GM12878 (cell line): ENCODE measurements at regions of chr4 and their contacts with region 1.

Region 1: DNA sequence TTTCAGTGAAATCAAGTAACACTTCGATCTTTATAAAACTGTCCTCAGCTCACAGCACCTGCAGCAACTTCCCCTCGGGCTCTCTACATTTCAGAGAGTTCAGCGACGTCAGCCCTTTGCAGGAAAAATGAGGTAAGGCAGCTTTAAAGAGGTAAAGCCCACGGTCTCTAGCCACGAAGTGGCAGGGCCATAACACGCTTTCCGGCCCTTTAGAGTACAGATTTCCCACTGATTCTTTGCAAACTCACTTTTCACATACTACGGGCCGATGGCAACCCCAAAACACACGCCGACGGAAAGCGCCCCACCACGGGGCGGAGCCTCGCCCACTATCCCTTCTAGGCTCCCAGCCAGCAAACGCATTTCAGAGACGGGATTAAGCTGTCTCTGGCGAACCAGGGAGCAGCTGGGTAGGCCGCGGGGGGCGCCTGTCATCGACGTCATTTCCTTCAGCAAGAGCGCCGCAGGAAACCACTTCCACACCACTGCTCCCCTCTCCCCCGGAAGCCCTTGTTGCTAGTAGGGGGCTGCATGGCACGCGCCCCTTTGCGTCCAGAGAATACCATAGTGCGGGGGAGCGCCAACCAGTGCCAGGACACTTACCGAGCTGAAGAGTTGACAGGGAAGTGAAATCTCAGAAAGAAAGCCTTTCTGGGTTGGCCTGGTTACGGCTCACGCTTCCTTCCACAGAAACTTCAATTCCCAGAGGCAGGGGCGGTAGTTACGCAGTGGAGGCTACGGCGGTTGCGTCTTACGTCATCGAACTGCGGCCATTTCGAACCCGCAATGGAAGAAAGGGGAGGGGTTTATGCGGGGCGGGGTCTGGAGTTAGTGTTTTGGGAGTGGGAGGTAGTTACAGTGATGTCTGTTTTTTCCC is at the start of gene TRMT10A:
- DNase-seq: peak; percentile 85
- ATAC-seq: peak; percentile 95
- H3K4me3 ChIP-seq: peak within 1 kb of the TSS; percentile 93
- H3K27ac ChIP-seq: peak within 1 kb of the TSS; percentile 97
- H3K4me1 ChIP-seq: no peaks in the 10 kb centered on the region
- H3K27me3 ChIP-seq: no peaks in the 10 kb centered on the region
- CTCF ChIP-seq: no peak
- EP300 ChIP-seq: no peak
- POLR2A ChIP-seq: peak; percentile 81
- RAD21 ChIP-seq: no peak
- polyA plus RNA-seq, gene TRMT10A: 8.8 to 9.6 TPM

Region 2: GRCh38 chr4:99366491-99366890 is 197.1 kb before region 1 on chr4:
- CTCF ChIA-PET with region 1: no interaction called
- POLR2A ChIA-PET with region 1: no interaction called
- RAD21 ChIA-PET with region 1: no interaction called
- SMC1A ChIA-PET with region 1: no interaction called
- in situ Hi-C with region 1: no loop called
- intact Hi-C with region 1: no loop called
- DNase-seq: no peak
- ATAC-seq: no peak
- H3K4me3 ChIP-seq: no peak overlapping the region
- H3K27ac ChIP-seq: no peak overlapping the region
- H3K4me1 ChIP-seq: no peaks in the 10 kb centered on the region
- H3K27me3 ChIP-seq: no peaks in the 10 kb centered on the region
- CTCF ChIP-seq: no peak
- EP300 ChIP-seq: no peak
- POLR2A ChIP-seq: no peak
- RAD21 ChIP-seq: no peak

Region 3: DNA sequence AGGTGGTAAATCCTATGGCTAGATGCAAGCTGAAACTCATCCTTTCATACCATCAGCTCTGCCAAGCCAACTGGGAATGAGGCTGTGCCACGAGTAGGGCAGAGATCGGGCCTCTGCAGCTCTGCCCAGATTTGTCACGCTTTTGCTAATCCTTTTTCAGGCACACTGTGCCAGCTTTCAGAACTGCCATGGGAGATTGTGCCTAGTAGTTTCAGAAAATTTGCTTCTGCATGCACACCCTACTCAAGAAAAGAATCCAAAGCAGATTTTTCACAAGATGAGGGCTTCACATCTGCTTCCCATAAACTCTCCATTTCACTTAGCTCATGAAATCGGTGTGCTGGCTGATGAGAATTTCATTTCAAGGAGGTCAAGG is 125.2 kb before region 1 on chr4:
- CTCF ChIA-PET with region 1: no interaction called
- POLR2A ChIA-PET with region 1: no interaction called
- RAD21 ChIA-PET with region 1: no interaction called
- SMC1A ChIA-PET with region 1: no interaction called
- in situ Hi-C with region 1: no loop called
- intact Hi-C with region 1: no loop called
- DNase-seq: no peak
- ATAC-seq: no peak
- H3K4me3 ChIP-seq: no peak overlapping the region
- H3K27ac ChIP-seq: no peak overlapping the region
- H3K4me1 ChIP-seq: no peaks in the 10 kb centered on the region
- H3K27me3 ChIP-seq: no peaks in the 10 kb centered on the region
- CTCF ChIP-seq: no peak
- EP300 ChIP-seq: no peak
- POLR2A ChIP-seq: no peak
- RAD21 ChIP-seq: no peak

Region 4: DNA sequence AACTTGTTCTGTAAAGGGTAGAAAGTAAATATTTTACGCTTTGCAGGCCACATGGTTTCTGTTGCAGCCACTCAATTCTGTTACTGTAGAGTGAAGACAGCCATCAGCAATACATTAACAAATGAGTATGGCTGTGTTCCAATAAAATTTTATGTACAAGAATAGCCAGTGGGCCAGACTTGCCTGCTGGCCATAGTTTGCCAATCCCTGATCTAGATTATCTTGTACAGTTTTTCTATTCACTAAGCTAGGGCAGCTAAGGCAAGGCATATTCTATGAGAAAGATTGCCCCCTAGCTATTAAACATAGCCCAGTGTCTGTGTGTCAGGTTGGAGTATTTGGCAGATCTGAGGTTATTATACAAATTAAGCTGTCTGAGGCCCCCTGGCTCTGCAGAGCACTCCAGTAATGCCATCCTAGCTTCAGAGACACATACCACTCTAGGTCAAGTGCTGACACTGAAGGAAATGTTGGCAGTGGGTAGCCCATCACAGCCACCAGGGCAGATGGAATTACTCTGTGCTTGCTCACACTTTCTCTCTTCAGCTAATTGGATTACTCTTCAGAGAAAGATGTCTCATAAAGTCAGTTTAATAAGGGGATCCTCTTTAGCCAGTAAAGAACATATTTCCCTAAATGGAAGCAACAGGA is 51.7 kb after region 1 on chr4:
- CTCF ChIA-PET with region 1: interaction called, 19 read pairs
- POLR2A ChIA-PET with region 1: no interaction called
- RAD21 ChIA-PET with region 1: interaction called, 13 read pairs
- SMC1A ChIA-PET with region 1: interaction called, 11 read pairs
- in situ Hi-C with region 1: no loop called
- intact Hi-C with region 1: no loop called
- DNase-seq: no peak
- ATAC-seq: peak; percentile 57
- H3K4me3 ChIP-seq: no peak overlapping the region
- H3K27ac ChIP-seq: no peak overlapping the region
- H3K4me1 ChIP-seq: no peaks in the 10 kb centered on the region
- H3K27me3 ChIP-seq: no peaks in the 10 kb centered on the region
- CTCF ChIP-seq: peak in 2 of 3 experiments; percentile 4 to 26; a peak in 1 of 6 replicates
- EP300 ChIP-seq: no peak
- POLR2A ChIP-seq: no peak
- RAD21 ChIP-seq: no peak

Region 5: DNA sequence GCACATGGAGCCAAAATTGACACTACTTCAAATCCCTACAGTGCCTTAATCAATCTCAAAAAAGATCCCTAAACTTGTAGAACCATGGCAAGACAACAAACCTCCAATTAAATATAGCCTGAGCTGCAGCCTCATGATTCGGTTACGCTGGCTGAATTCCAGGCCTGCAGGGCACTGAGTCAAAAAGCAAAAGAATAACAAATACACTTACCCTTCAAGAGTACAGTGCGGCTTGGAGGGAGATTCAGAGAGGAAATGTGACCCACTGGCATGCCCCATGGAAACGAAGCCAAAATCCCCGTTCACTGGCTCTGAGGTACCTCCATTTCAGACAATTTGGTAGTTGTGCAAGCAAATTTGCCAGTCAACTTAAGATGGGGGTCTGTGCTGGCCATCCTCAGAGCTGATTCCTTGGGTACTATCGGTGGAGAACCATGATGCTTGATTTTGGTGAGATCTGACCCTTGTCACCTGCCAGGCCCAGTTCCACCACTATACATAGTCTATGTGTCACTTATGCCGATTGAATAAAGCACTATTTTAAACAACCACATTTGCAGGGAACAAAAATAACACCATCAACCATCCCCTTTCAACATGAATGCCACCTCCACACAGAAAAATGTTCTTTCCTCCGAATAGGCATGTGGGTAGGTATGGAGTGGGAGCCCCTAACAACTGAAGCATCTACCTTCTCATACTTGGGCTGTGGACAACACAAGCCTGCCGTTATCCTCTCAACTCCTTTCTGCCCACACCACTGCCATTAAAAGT is 91.9 kb after region 1 on chr4:
- CTCF ChIA-PET with region 1: no interaction called
- POLR2A ChIA-PET with region 1: no interaction called
- RAD21 ChIA-PET with region 1: no interaction called
- SMC1A ChIA-PET with region 1: no interaction called
- in situ Hi-C with region 1: no loop called
- intact Hi-C with region 1: no loop called
- DNase-seq: no peak
- ATAC-seq: peak; percentile 27; the same call in 2 of the 3 replicates
- H3K4me3 ChIP-seq: no peak overlapping the region
- H3K27ac ChIP-seq: no peak overlapping the region
- H3K4me1 ChIP-seq: no peaks in the 10 kb centered on the region
- H3K27me3 ChIP-seq: no peaks in the 10 kb centered on the region
- CTCF ChIP-seq: no peak
- EP300 ChIP-seq: no peak
- POLR2A ChIP-seq: no peak
- RAD21 ChIP-seq: no peak

Region 6: DNA sequence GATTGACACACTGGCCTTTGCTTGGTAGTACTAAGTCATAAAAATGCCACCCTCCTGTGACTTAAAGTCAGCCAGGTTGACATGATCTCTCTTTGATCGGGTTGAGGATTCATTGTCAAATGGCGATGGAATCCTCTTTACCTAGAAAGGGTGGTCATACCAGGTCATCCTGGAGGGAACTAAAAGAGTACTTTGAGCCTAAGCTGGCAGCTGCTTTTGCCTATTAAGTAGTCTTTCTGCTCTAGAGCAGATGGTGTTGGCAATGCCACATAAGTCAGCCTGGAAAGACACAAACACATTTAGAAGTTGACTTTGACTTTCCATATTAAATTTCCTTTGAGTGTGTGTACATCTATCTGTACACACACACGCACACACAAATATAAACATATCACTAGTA is 133.3 kb after region 1 on chr4:
- CTCF ChIA-PET with region 1: no interaction called
- POLR2A ChIA-PET with region 1: no interaction called
- RAD21 ChIA-PET with region 1: no interaction called
- SMC1A ChIA-PET with region 1: no interaction called
- in situ Hi-C with region 1: no loop called
- intact Hi-C with region 1: no loop called
- DNase-seq: no peak
- ATAC-seq: no peak
- H3K4me3 ChIP-seq: no peak overlapping the region
- H3K27ac ChIP-seq: no peak overlapping the region
- H3K4me1 ChIP-seq: no peaks in the 10 kb centered on the region
- H3K27me3 ChIP-seq: no peaks in the 10 kb centered on the region
- CTCF ChIP-seq: no peak
- EP300 ChIP-seq: no peak
- POLR2A ChIP-seq: no peak
- RAD21 ChIP-seq: no peak

Region 7: DNA sequence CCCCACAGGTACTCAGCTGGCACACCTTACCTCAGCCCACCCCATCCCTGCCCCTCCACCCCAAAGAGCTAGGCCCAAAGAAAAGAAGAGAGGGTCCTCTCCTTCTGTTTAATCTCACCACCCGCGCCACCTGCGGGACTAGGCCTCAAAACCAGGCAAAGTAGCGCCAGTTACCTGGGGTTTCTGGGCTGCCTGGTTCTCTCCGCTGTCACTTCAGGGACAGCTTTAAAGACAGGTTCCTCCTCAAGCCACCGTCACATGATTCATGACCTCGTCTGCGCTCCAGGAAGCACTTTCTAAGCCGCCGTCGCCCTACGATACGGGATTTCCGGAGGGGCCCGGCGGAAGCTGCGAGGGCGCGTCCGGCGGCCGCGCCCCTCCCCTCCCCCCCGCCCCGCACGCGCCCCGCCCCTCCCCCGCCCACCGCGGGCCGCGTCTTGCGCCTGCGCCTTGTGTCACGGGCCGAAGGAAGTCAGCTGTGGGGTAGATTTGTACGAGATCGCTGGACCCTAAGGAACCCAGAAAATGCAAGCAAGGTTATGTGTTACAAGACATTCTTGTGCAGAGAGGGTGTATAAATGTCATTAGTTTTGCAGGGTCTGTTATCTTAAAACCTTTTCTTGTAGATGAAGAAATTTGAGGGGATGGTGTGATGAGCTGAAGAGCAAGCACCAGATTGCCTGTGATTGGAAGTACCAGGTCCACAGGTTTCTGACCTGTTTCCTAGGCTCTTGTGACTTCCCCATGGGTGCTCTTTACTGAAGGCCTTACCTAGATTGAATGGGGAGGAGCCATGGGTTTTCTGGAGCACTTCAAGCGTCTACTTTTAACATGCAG is 330.8 kb after region 1 on chr4 and contains the start of gene LAMTOR3:
- CTCF ChIA-PET with region 1: no interaction called
- POLR2A ChIA-PET with region 1: no interaction called
- RAD21 ChIA-PET with region 1: interaction called, 3 read pairs
- SMC1A ChIA-PET with region 1: no interaction called
- in situ Hi-C with region 1: loop called (anchors 5 kb)
- intact Hi-C with region 1: no loop called
- DNase-seq: peak; percentile 75
- ATAC-seq: peak; percentile 99
- H3K4me3 ChIP-seq: peak within 1 kb of the TSS; percentile 100
- H3K27ac ChIP-seq: peak within 1 kb of the TSS; percentile 69
- H3K4me1 ChIP-seq: no peaks in the 10 kb centered on the region
- H3K27me3 ChIP-seq: no peaks in the 10 kb centered on the region
- CTCF ChIP-seq: no peak
- EP300 ChIP-seq: no peak
- POLR2A ChIP-seq: peak; percentile 83
- RAD21 ChIP-seq: no peak
- polyA plus RNA-seq, gene LAMTOR3: 88.7 to 120 TPM